ENCODE measurements at regions of chr13 and their contacts with region 1.

Region 1: GRCh38 chr13:59337070-59337469 is 826.7 kb downstream of the DIAPH3 start:
- DNase-seq: no peak
- CTCF ChIP-seq: no peak

Region 2: DNA sequence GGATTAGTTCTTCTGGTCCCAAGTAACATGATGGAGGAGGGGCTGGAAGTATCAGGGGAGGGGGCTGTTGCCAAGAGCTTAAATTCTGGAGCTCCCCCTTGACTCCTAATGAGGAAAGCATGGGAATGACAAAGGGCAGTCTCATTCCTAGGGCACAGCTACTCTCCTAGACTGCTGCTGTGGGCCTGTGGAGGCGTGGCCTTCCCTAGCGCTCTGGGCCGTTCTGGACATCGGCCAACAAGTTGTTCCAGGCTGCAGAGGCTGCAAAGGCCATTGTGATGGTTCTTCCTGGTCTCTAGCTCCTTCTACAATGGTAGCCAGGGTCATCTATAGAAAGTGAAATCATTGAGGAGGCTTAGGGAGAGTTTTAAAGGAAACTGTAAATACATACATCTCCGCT is 89.9 kb before region 1 on chr13:
- in situ Hi-C with region 1: loop called (anchors 25 kb)
- DNase-seq: no peak
- CTCF ChIP-seq: no peak

Region 3: DNA sequence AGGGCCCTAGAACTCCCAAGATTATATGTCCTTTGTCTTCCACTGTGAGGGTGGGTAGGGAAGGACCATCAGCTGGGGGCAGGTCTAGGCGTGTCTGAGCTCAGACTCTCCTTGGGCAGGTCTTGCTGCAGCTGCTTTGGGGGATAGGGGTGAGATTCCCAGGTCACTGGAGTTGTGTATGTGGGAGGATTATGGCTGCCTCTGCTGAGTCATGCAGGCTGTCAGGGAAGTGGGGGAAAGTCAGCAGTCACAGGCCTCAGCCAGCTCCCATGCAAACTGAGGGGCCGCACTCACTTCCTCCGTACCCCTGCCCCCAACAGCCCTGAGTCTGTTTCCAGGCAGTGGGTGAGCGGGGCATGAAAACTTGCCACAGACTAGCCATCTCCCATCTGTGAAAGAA is 225.9 kb after region 1 on chr13:
- in situ Hi-C with region 1: no loop called
- DNase-seq: no peak
- CTCF ChIP-seq: no peak

Measured in GM13977 (cell line).